IMR-90 (cell line): ENCODE measurements at regions of chr3 and their contacts with region 1.

Region 1: DNA sequence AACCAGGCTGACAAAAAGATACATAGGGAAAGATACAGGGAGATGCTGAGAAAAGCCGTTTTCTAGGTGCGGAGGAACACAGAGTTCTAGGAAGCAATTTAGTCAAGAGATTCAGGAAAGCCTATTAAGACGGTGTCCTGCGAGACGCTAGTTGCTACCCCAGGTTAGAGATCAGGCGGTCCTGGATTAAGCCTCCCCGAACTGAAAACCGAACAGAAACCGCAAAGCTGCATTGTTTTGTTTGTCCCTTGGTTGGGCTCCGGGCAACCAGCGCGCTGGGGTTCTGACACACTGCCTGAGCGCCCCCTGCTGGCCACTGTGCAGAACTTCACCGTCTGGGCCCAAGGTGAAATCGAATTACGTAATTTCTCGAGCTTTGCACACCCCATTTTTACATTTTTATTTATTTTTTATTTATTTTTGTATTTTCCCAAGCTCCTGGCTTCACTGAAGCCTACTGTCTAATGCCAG is 37.3 kb upstream of the NDUFB4 start:
- DNase-seq: peak; percentile 84
- ATAC-seq: peak; percentile 73
- H3K4me3 ChIP-seq: peak overlapping the region; percentile 88
- H3K27ac ChIP-seq: peak overlapping the region; percentile 73
- H3K4me1 ChIP-seq: peaks cover 6% of the 10 kb centered on the region
- H3K27me3 ChIP-seq: no peaks in the 10 kb centered on the region
- CTCF ChIP-seq: peak; percentile 98
- POLR2A ChIP-seq: peak; percentile 51
- RAD21 ChIP-seq: peak; percentile 94

Region 2: GRCh38 chr3:120245386-120245785 is 313.4 kb before region 1 on chr3:
- CTCF ChIA-PET with region 1: interaction called, 23 read pairs
- POLR2A ChIA-PET with region 1: no interaction called
- dilution Hi-C with region 1: no loop called
- in situ Hi-C with region 1: loop called (anchors 5 kb)
- intact Hi-C with region 1: loop called (anchors 1 kb)
- DNase-seq: no peak
- ATAC-seq: no peak
- H3K4me3 ChIP-seq: no peak overlapping the region
- H3K27ac ChIP-seq: no peak overlapping the region
- H3K4me1 ChIP-seq: no peaks in the 10 kb centered on the region; the same call in 1 of the 2 replicates
- H3K27me3 ChIP-seq: peaks cover 12% of the 10 kb centered on the region
- CTCF ChIP-seq: no peak
- POLR2A ChIP-seq: no peak
- RAD21 ChIP-seq: no peak

Region 3: GRCh38 chr3:120450600-120451271 is 108.1 kb before region 1 on chr3 and contains the start of gene FSTL1:
- CTCF ChIA-PET with region 1: interaction called, 5 read pairs
- POLR2A ChIA-PET with region 1: interaction called, 3 read pairs
- dilution Hi-C with region 1: no loop called
- in situ Hi-C with region 1: no loop called
- intact Hi-C with region 1: loop called (anchors 1 kb)
- DNase-seq: peak; percentile 70
- ATAC-seq: peak; percentile 76
- H3K4me3 ChIP-seq: peak within 1 kb of the TSS; percentile 94
- H3K27ac ChIP-seq: peak within 1 kb of the TSS; percentile 98
- H3K4me1 ChIP-seq: peaks cover 17% of the 10 kb centered on the region
- H3K27me3 ChIP-seq: no peaks in the 10 kb centered on the region
- CTCF ChIP-seq: no peak
- POLR2A ChIP-seq: peak; percentile 93
- RAD21 ChIP-seq: no peak
- total RNA-seq, gene FSTL1: 1,097 and 1,642 TPM in 2 replicates

Region 4: GRCh38 chr3:120742198-120742849 is 183.5 kb after region 1 on chr3 and contains the starts of genes GTF2E1 and RABL3:
- CTCF ChIA-PET with region 1: interaction called, 3 read pairs
- POLR2A ChIA-PET with region 1: no interaction called
- dilution Hi-C with region 1: no loop called
- in situ Hi-C with region 1: no loop called
- intact Hi-C with region 1: loop called (anchors 2 kb)
- DNase-seq: peak; percentile 100
- ATAC-seq: peak; percentile 98
- H3K4me3 ChIP-seq: peak within 1 kb of the TSS; percentile 69
- H3K27ac ChIP-seq: peak within 1 kb of the TSS; percentile 91
- H3K4me1 ChIP-seq: peaks cover 4% of the 10 kb centered on the region
- H3K27me3 ChIP-seq: no peaks in the 10 kb centered on the region
- CTCF ChIP-seq: no peak
- POLR2A ChIP-seq: peak; percentile 86
- RAD21 ChIP-seq: no peak
- total RNA-seq, gene GTF2E1: 18.5 and 26.9 TPM in 2 replicates
- total RNA-seq, gene RABL3: 17.0 and 31.1 TPM in 2 replicates

Region 5: GRCh38 chr3:121152573-121152972 is 593.8 kb after region 1 on chr3:
- CTCF ChIA-PET with region 1: no interaction called
- POLR2A ChIA-PET with region 1: no interaction called
- dilution Hi-C with region 1: no loop called
- in situ Hi-C with region 1: no loop called
- intact Hi-C with region 1: loop called (anchors 10 kb)
- DNase-seq: no peak
- ATAC-seq: no peak
- H3K4me3 ChIP-seq: no peak overlapping the region
- H3K27ac ChIP-seq: no peak overlapping the region
- H3K4me1 ChIP-seq: no peaks in the 10 kb centered on the region
- H3K27me3 ChIP-seq: no peaks in the 10 kb centered on the region
- CTCF ChIP-seq: no peak
- POLR2A ChIP-seq: no peak
- RAD21 ChIP-seq: no peak